GM10248 (cell line): ENCODE measurements at regions of chr14 and their contacts with region 1.

Region 1: DNA sequence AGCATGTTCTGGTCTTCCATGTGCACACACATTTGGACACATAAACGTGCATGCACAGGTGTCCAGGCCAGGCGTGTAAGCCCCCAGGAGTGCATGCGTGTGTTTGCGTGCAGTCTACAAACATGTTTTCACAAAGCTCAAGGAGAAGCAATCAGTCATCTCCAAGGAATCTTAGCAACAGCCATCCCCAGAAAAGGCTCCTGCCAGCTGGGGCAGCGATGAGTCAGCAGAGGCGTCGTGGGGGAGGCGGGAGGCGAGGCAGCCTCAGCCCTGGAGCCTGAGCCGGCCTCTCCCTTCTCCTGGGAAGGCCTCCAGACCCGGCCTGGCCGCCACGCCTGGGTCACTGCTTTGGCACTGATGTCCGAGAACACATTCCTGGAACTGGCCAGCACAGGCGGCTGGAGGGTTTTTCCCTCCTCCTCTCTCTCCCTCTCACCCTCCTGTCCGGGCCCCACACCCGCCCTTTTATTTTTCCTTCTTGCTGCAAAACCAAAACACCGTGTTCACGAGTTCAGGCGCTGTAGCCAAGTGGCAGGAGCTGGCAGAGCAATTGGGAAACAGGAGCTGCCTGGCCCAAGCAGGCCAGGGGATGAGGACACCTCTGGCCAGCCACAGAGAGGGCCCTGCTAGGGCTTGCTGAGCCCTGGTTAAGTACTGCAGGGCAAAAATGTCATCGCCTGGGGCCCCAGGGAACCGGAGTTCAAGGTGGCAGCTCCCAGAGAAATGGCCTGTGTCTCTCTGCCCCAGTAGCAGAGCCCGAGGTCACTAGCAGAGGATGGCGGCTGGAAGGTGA is 92.7 kb downstream of the LRRC74A start:
- DNase-seq: no peak
- CTCF ChIP-seq: no peak

Region 2: GRCh38 chr14:76812211-76813044 is 106.5 kb before region 1 on chr14 and contains the start of gene ANGEL1:
- CTCF ChIA-PET with region 1: no interaction called
- POLR2A ChIA-PET with region 1: no interaction called
- DNase-seq: peak; percentile 93
- CTCF ChIP-seq: no peak

Region 3: DNA sequence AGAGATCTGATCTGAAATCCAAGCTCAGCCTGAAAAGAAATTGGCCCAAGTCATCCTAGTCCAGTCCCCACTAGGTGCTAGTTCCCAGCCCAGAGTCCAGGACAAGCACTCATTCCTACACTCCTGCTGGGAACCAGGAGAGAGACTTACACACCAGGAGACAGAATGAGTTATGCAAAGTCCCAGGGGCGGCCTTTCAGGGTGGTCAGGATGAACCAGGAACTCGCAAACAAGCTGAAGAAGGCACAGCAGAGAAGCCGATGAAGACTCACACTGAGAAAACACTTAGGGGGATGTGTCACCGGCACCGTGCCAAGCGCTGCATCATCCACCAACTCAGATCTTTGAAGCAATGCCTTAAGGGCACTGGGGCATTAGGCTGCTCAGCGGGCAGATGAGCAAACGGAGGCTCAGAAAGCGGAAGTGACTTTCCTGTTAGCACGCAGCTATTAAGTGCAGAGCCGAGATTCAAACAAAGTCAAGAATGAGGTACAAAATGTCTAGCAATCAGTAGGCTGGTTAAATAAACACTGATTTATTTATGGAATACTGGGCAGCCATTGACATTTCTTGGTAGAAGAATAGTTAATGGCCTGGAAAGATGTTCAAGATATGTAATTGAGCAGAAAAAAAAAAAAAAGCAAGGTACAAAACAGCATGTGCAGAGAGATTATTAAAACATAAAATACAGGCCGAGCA is 14.1 kb before region 1 on chr14:
- CTCF ChIA-PET with region 1: interaction called, 25 read pairs
- POLR2A ChIA-PET with region 1: no interaction called
- DNase-seq: peak; percentile 75
- CTCF ChIP-seq: no peak

Region 4: DNA sequence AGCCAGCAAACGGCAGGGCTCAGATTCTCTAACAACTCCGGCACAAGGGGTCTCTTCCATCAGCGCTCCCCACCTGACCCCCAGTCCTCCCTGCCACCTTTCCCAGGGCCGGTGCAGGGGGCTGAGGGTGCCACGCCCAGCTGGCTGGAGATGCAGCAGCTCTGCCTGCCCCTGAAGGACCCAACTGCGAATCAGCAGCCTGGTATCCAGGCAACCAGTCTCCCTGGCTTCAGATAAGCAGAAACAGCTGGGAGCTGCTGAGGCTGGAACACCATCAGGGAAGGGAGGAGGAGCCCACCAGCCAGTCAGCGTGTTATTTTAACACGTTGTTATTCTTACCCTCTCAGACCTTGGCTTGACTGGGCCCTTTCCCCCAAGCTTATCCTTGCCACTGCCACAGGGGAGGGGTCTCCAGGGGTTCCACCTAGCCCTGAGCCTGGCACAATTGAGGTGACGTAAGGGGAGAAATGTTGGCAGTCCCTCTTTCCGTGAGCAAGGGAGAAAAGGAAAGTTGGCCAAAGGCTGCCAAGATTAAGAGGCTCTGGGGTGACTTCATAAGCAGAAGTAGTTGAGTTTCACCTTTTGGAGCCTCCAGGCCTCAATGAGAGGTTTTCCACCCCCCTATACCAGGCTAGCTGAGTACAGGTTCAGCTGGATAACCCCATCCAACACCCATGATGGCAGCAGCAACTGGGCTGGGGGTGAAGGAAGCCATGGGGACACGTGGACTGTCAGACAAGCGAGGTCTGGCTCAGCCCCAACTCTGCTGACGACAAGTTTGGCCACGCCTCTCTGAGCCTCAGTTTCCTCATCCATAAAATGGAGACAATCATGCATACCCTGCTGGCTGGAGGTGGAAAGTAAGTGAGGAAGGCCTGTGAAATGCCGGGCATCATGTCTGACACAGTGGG is 18.5 kb after region 1 on chr14:
- CTCF ChIA-PET with region 1: interaction called, 20 read pairs
- POLR2A ChIA-PET with region 1: no interaction called
- DNase-seq: no peak
- CTCF ChIP-seq: no peak

Region 5: DNA sequence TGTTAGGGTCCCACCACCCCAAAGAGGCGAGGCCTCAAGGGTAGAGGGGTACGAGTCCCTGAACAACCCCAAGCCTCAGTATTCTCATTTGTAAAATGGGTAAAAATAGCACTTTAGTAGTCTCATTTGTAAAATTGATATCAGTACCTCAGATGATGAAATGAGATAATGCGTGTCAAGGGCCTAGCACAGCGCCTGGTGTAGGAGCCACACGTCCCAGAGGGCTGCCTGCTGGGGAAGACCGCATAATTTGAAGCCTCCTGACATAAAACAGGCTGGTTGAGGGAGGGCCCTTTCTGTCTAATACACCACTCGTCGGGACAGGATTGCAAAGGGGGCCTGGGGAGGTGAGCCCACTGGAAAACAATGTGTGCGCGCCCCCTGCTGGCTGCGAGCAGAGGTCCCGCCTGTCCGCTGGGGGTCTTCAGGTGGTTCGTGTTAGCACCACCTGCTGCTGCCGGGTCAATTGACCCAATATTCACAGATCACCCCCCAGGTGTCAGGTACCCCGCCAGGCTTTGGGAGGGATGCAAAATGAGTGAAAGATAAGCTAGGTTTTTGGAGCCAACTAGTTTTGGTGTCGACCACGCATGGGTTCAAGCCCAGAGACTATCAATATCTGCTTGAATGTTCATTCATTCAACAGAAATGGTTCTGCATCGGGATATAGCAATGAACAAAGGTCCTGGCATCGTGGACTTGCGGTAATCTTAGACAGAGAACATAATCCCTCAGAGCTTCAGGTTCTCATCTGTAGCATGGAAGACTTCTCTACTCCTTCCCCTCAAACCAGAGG is 134.3 kb after region 1 on chr14:
- CTCF ChIA-PET with region 1: interaction called, 247 read pairs
- POLR2A ChIA-PET with region 1: no interaction called
- DNase-seq: peak; percentile 83
- CTCF ChIP-seq: peak; percentile 84

Region 6: DNA sequence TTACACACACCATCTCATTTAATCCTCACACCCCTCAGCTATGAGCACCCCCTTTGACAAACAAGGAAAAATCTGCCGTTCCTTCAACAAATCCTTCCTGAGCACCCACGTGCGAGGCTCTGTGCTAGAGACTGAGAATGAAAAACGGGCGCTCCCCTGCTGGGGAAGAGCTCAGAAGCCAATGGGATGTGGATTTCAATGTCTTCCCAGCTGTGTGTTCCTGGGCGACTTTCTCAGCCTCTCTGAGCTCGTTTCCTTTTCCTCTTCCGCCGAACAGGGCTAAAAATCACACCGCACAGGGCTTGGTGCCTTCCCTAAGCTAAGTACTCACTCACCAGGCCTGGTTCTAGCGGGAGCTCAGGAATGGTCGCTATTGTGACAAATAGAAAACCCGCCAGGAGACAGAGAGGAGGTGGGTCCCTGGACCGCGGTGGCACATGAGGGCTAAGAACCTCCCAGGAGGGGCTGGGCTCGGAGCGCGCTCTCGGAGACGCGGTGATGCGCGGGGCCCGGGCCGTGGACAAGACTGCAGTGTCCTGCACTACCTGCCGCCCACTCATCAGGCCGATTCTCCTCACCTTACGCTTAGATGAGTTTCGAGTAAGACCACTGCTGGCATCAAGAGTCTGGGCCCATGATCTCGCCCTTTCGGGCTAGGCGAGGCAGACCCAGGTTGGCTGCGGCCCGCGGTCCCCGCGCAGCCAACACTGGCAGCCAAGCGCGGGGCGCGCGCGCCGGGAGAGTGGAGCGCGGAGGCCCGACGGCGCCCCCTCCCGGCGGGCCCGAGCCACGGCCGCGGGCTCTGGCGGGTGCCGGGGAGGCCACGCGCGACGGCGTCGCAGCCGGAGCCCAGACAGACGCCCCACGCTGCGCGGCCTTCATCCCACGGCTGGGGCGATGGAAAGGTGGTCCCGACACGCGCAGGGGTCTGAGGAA is 205.7 kb after region 1 on chr14:
- CTCF ChIA-PET with region 1: interaction called, 15 read pairs
- POLR2A ChIA-PET with region 1: no interaction called
- DNase-seq: peak; percentile 79
- CTCF ChIP-seq: peak; percentile 89